ENCODE measurements at regions of chr17 and their contacts with region 1.

Region 1: GRCh38 chr17:77088455-77089123 is 52.2 kb upstream of the SEC14L1 start:
- DNase-seq: peak; percentile 100
- H3K4me3 ChIP-seq: peak overlapping the region; percentile 83
- H3K27ac ChIP-seq: peak overlapping the region; percentile 73
- H3K4me1 ChIP-seq: peaks cover 60% of the 10 kb centered on the region
- CTCF ChIP-seq: peak; percentile 81

Region 2: DNA sequence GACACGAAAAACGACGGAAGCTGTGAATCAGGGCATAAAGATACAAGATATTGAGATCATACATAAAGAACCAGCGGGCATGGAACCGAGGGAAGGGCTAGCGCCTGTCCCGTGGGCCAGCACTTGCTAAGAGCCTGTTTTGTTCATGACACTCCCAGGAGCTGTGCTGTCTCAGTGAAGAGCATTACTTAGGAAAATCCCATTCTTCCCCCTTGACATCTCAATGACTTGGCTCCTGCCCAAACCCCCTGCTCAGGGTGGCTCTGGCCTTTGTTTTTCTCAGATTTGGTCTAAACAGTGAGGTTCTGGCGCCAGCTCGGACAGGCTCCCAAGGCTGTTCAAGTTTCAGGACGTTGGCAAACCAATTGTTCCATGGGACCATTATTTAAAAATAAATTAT is 26.9 kb before region 1 on chr17:
- CTCF ChIA-PET with region 1: no interaction called
- POLR2A ChIA-PET with region 1: no interaction called
- intact Hi-C with region 1: no loop called
- DNase-seq: no peak
- H3K4me3 ChIP-seq: no peak overlapping the region
- H3K27ac ChIP-seq: no peak overlapping the region
- H3K4me1 ChIP-seq: no peaks in the 10 kb centered on the region
- CTCF ChIP-seq: no peak

Region 3: GRCh38 chr17:77109764-77110359 is 21.3 kb after region 1 on chr17:
- CTCF ChIA-PET with region 1: interaction called, 4 read pairs
- POLR2A ChIA-PET with region 1: interaction called, 10 read pairs
- intact Hi-C with region 1: no loop called
- DNase-seq: peak; percentile 85
- H3K4me3 ChIP-seq: peak overlapping the region; percentile 27
- H3K27ac ChIP-seq: no peak overlapping the region
- H3K4me1 ChIP-seq: peaks cover 38% of the 10 kb centered on the region
- CTCF ChIP-seq: peak; percentile 49; the same call in 1 of the 2 replicates

Region 4: GRCh38 chr17:77212081-77212834 is 123.7 kb after region 1 on chr17:
- CTCF ChIA-PET with region 1: interaction called, 4 read pairs
- POLR2A ChIA-PET with region 1: interaction called, 4 read pairs
- intact Hi-C with region 1: loop called (anchors 1 kb)
- DNase-seq: peak; percentile 92
- H3K4me3 ChIP-seq: peak overlapping the region; percentile 54
- H3K27ac ChIP-seq: peak overlapping the region; percentile 87
- H3K4me1 ChIP-seq: peaks cover 53% of the 10 kb centered on the region
- CTCF ChIP-seq: no peak

Region 5: DNA sequence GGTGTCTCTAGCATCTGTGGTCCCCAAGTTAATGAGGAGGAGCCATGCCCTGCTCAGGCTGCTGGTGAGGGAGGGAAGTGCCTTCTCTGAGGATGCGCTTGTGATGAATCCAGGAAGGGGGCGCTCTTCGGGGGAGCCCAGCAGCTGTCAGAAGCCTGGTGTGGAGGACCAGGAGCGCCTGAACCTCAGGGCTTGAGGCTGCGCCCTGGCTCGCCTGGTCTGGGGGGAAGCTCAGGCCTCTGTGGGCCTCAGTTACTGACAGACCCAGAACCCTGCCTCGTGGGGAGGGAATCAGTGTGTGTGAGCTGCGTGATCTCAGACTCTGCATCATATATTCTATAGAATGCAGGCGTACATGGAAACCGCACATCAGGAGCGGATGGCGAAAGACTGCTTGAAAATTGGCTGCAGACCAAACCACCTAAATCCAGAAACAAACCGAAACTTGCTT is 178.3 kb after region 1 on chr17:
- CTCF ChIA-PET with region 1: interaction called, 16 read pairs
- POLR2A ChIA-PET with region 1: no interaction called
- intact Hi-C with region 1: no loop called
- DNase-seq: peak; percentile 58
- H3K4me3 ChIP-seq: no peak overlapping the region
- H3K27ac ChIP-seq: no peak overlapping the region
- H3K4me1 ChIP-seq: no peaks in the 10 kb centered on the region
- CTCF ChIP-seq: peak; percentile 84

Region 6: GRCh38 chr17:77476931-77477877 is 388.6 kb after region 1 on chr17:
- CTCF ChIA-PET with region 1: no interaction called
- POLR2A ChIA-PET with region 1: no interaction called
- intact Hi-C with region 1: loop called (anchors 10 kb)
- DNase-seq: peak; percentile 70
- H3K4me3 ChIP-seq: peak overlapping the region; percentile 13
- H3K27ac ChIP-seq: peak overlapping the region; percentile 91
- H3K4me1 ChIP-seq: peaks cover 81% of the 10 kb centered on the region
- CTCF ChIP-seq: no peak

Region 7: DNA sequence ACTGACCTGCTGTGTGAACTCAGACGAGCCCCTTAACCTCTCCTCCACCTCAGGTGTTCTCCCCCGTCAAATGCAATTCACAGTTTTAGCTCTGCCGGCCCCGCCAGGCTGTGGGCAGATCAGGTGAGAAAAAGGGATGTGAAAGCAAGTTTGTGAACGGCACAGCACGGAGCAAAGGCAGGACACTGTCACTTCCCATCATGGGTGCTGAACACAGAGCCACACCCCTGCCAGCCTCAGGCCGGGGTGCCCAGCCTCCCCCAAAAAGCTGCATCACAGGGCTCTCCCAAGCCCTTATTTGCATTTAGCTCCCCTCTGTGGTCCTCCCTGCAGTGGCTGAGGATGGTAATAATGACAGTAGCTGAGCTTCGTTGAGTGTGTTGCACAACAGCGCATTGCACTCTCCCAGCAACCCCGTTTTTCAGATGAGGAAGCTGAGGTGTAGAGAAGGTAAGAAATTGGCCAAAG is 781.1 kb after region 1 on chr17:
- CTCF ChIA-PET with region 1: no interaction called
- POLR2A ChIA-PET with region 1: no interaction called
- intact Hi-C with region 1: loop called (anchors 10 kb)
- DNase-seq: peak; percentile 97
- H3K4me3 ChIP-seq: peak overlapping the region; percentile 61
- H3K27ac ChIP-seq: peak overlapping the region; percentile 86
- H3K4me1 ChIP-seq: peaks cover 83% of the 10 kb centered on the region
- CTCF ChIP-seq: no peak

Measured in OCI-LY7 (cell line).